Right cardiac atrium (tissue), 5 donors: ENCODE measurements at regions of chr17 and their contacts with region 1.

Region 1: GRCh38 chr17:81148986-81149533 is 16.2 kb upstream of the PVALEF start:
- DNase-seq: peak in 1 of 3 donors; percentile 55
- ATAC-seq: peak; percentile 30 to 34
- H3K4me3 ChIP-seq: no peak overlapping the region
- H3K27ac ChIP-seq: no peak overlapping the region
- H3K4me1 ChIP-seq: no peaks in the 10 kb centered on the region
- H3K27me3 ChIP-seq: no peaks in the 10 kb centered on the region

Region 2: GRCh38 chr17:81083125-81083765 is 65.8 kb before region 1 on chr17:
- intact Hi-C with region 1: no loop called
- DNase-seq: peak; percentile 69 to 85 (median 79)
- ATAC-seq: peak; percentile 53 to 82
- H3K4me3 ChIP-seq: no peak overlapping the region
- H3K27ac ChIP-seq: peak overlapping the region; percentile 58
- H3K4me1 ChIP-seq: peaks cover 5% of the 10 kb centered on the region
- H3K27me3 ChIP-seq: no peaks in the 10 kb centered on the region

Region 3: GRCh38 chr17:81194941-81195901 is 46.2 kb after region 1 on chr17:
- intact Hi-C with region 1: loop called in 1 of 4 experiments (anchors 5 kb)
- DNase-seq: peak in 2 of 3 donors; percentile 61 to 66
- ATAC-seq: peak; percentile 1 to 25
- H3K4me3 ChIP-seq: no peak overlapping the region
- H3K27ac ChIP-seq: no peak overlapping the region
- H3K4me1 ChIP-seq: no peaks in the 10 kb centered on the region
- H3K27me3 ChIP-seq: no peaks in the 10 kb centered on the region

Region 4: GRCh38 chr17:81346090-81346907 is 197.2 kb after region 1 on chr17:
- intact Hi-C with region 1: no loop called
- DNase-seq: peak; percentile 99 to 100 (median 99)
- ATAC-seq: peak; percentile 87 to 90
- H3K4me3 ChIP-seq: peak overlapping the region; percentile 80
- H3K27ac ChIP-seq: peak overlapping the region; percentile 79
- H3K4me1 ChIP-seq: no peaks in the 10 kb centered on the region
- H3K27me3 ChIP-seq: no peaks in the 10 kb centered on the region